PC-9 (cell line): ENCODE measurements at regions of chr22 and their contacts with region 1.

Region 1: DNA sequence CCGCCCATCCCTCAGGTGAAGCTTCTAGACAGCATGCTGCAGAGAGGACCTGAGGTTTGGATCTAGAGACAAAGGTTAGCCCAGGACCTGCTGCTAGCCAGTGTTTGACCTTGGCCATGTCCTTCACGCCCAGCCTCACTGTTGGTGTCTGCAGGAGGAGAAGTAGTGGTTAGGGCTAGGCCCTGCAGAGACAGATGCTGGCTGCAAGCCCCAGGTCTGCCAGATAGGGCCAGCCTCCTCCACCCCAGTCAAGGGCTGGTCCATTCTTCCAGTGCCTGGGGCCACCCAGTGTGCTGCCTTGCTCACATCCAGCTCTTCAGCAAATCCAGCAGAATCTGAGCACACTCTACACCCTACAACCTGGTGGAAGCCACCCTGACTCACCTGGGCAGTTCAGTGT is 21.5 kb upstream of the MIEF1 start:
- DNase-seq: no peak
- H3K4me3 ChIP-seq: no peak overlapping the region
- H3K27ac ChIP-seq: no peak overlapping the region
- H3K4me1 ChIP-seq: no peaks in the 10 kb centered on the region
- H3K27me3 ChIP-seq: peaks cover 35% of the 10 kb centered on the region
- CTCF ChIP-seq: no peak

Region 2: DNA sequence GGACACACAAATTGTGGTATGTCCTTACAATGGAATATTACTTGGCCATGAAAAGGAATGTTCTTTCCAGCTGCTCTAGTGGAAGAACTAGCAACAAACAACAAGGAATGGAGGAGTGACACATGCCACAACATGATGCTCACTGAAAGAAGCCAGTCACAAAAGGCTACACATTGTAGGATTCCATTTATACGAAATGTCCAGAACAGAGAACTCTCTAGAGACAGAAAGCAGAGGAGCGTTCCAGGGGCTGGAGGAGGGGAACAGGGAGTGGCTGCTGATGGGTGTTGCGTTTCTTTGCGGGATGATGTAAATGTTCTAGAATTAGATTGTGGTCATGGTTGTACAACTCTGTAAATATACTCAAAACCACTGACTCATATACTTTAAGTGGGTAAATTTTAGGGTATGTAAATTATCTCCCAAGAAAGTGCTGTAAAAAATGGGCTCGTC is 203.4 kb before region 1 on chr22:
- CTCF ChIA-PET with region 1: no interaction called
- POLR2A ChIA-PET with region 1: interaction called, 17 read pairs
- intact Hi-C with region 1: no loop called
- DNase-seq: peak in 1 of 2 experiments; percentile 59
- H3K4me3 ChIP-seq: no peak overlapping the region
- H3K27ac ChIP-seq: no peak overlapping the region
- H3K4me1 ChIP-seq: peaks cover 12% of the 10 kb centered on the region
- H3K27me3 ChIP-seq: no peaks in the 10 kb centered on the region
- CTCF ChIP-seq: no peak

Region 3: GRCh38 chr22:39349506-39349966 is 131.0 kb before region 1 on chr22:
- CTCF ChIA-PET with region 1: interaction called, 13 read pairs
- POLR2A ChIA-PET with region 1: no interaction called
- intact Hi-C with region 1: no loop called
- DNase-seq: peak in 1 of 2 experiments; percentile 28
- H3K4me3 ChIP-seq: peak overlapping the region; percentile 59
- H3K27ac ChIP-seq: no peak overlapping the region
- H3K4me1 ChIP-seq: peaks cover 4% of the 10 kb centered on the region
- H3K27me3 ChIP-seq: peaks cover 12% of the 10 kb centered on the region; the same call in 1 of the 2 replicates
- CTCF ChIP-seq: no peak

Region 4: GRCh38 chr22:39738746-39739145 is 258.2 kb after region 1 on chr22:
- CTCF ChIA-PET with region 1: no interaction called
- POLR2A ChIA-PET with region 1: no interaction called
- intact Hi-C with region 1: no loop called
- DNase-seq: no peak
- H3K4me3 ChIP-seq: no peak overlapping the region
- H3K27ac ChIP-seq: no peak overlapping the region
- H3K4me1 ChIP-seq: peaks cover 8% of the 10 kb centered on the region
- H3K27me3 ChIP-seq: peaks cover 26% of the 10 kb centered on the region
- CTCF ChIP-seq: no peak